ENCODE measurements at regions of chr1 and their contacts with region 1.

Region 1: GRCh38 chr1:151070474-151071276 is at the start of gene GABPB2:
- DNase-seq: peak; percentile 78 to 94 (median 89)
- ATAC-seq: peak; percentile 91
- H3K4me3 ChIP-seq: peak within 1 kb of the TSS; percentile 99
- H3K4me3 Mint-ChIP-seq: peak within 1 kb of the TSS; percentile 94 to 100 (median 99)
- H3K27ac ChIP-seq: peak within 1 kb of the TSS; percentile 94
- H3K27ac Mint-ChIP-seq: peak within 1 kb of the TSS; percentile 97 to 100 (median 100)
- H3K4me1 ChIP-seq: peaks cover 8 to 9% of the 10 kb centered on the region in 2 donors
- H3K4me1 Mint-ChIP-seq: peaks cover 5 to 37% (median 29%) of the 10 kb centered on the region in 7 donors
- H3K27me3 ChIP-seq: no peaks in the 10 kb centered on the region
- H3K27me3 Mint-ChIP-seq: peaks cover 0 to 2% (median 0%) of the 10 kb centered on the region in 5 donors
- total RNA-seq, gene GABPB2: 13.7 to 42.2 (median 32.2) TPM

Region 2: DNA sequence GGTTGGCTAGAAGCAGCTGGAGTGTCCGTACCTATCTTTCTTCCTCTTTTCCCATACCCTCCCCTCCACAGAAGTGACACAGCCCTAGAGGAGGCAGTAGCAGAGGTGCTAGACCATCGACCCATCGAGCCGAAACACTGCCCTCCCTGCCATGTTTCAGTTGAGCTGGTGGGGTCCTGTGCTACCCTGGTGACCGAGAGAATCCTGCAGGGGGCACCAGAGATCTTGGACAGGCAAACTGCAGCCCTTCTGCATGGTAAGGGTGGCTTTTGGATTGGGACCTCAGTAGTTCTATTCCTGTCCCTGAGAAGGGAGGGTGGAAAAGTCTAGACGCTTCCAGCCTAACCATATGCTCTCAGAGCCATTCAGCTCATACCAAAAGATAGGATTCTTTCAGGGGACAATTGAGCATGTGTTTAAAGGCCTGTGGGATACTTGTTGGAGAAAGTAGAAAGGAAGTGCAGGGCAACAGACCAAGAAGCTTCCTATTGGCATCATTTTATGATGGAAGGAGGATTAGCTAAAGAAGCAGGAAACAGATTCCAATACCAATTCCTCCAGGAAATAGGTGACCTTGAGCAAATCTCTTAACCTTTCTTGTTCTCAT is 46.0 kb before region 1 on chr1:
- CTCF ChIA-PET with region 1: interaction called, 6 read pairs
- POLR2A ChIA-PET with region 1: interaction called, 13 read pairs
- intact Hi-C with region 1: loop called (anchors 1 kb)
- DNase-seq: peak; percentile 72 to 91 (median 83)
- ATAC-seq: peak; percentile 100
- H3K4me3 ChIP-seq: no peak overlapping the region
- H3K4me3 Mint-ChIP-seq: peak overlapping the region; percentile 16 to 73 (median 61)
- H3K27ac ChIP-seq: no peak overlapping the region
- H3K27ac Mint-ChIP-seq: peak overlapping the region; percentile 37 to 93 (median 74)
- H3K4me1 ChIP-seq: no peaks in the 10 kb centered on the region
- H3K4me1 Mint-ChIP-seq: peaks cover 4 to 22% (median 6%) of the 10 kb centered on the region in 7 donors
- H3K27me3 ChIP-seq: no peaks in the 10 kb centered on the region
- H3K27me3 Mint-ChIP-seq: no peaks in the 10 kb centered on the region

Region 3: DNA sequence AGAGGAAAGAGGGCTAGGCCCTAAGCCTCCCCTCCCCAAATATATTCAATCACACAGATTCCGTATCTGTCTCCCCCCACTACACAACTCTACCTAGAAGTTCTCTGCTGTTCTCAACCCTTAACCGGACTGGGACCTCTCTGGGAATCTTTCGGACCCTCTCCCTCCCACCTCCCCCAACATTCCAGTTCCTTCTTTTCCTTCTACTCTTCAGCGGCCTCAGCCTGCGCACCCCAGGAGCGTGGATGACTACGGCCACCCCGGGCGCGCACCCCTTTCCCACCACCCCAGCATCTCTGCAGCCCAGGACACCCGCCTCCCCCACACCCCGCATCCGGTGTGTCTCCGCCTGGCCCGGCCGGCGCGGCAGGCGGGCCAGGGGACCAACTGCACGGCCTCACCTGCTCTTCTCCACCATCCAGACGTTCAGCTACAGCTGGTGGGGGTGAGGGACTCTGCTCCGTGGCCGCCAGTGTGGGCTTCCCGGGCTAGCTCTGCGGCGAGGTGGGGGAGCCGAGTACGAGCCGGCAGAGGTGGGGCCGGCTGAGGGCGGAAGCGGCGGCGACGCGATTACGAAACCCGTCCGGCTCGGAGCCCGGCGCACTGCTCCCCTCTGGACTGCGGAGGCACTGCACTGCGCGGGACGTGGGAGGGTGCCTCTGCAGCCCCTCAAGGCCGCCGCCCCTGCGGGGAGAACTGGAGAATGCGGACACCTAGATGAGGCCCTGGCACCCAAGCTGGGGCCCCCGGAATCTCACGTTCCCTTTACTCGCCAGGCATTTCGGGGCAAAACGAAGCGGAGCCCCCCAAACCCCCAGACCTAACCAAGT is 11.4 kb before region 1 on chr1 and contains the start of gene CDC42SE1:
- CTCF ChIA-PET with region 1: interaction called, 14 read pairs
- POLR2A ChIA-PET with region 1: interaction called, 67 read pairs
- intact Hi-C with region 1: loop called (anchors 1 kb)
- DNase-seq: peak; percentile 76 to 85 (median 82)
- ATAC-seq: peak; percentile 84
- H3K4me3 ChIP-seq: peak within 1 kb of the TSS; percentile 82
- H3K4me3 Mint-ChIP-seq: peak within 1 kb of the TSS; percentile 95 to 100 (median 99)
- H3K27ac ChIP-seq: peak within 1 kb of the TSS; percentile 99
- H3K27ac Mint-ChIP-seq: peak within 1 kb of the TSS; percentile 93 to 99 (median 95)
- H3K4me1 ChIP-seq: peaks cover 11 to 26% of the 10 kb centered on the region in 2 donors
- H3K4me1 Mint-ChIP-seq: peaks cover 35 to 55% (median 41%) of the 10 kb centered on the region in 7 donors
- H3K27me3 ChIP-seq: no peaks in the 10 kb centered on the region
- H3K27me3 Mint-ChIP-seq: no peaks in the 10 kb centered on the region
- total RNA-seq, gene CDC42SE1: 362 to 516 (median 425) TPM

Region 4: DNA sequence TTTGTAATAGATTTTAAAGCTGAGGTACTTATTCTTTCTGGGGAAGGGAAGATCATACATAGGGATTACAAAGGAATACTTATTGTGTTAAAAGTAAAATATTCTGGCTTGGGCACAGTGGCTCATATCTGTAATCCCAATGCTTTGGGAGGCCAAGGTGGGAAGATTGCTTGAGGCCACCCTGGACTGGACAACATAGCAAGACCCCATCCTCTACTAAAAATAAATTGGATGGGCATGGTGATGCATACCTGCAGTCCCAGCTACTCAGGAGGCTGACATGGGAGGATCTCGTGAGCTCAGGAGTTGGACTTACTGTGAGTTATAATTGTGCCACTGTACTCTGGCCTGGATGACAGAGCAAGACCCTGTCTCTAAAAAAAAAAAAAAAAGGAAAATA is 27.5 kb after region 1 on chr1:
- CTCF ChIA-PET with region 1: interaction called, 3 read pairs
- POLR2A ChIA-PET with region 1: interaction called, 4 read pairs
- intact Hi-C with region 1: loop called in 1 of 2 experiments (anchors 1 kb)
- DNase-seq: no peak
- ATAC-seq: no peak
- H3K4me3 ChIP-seq: no peak overlapping the region
- H3K4me3 Mint-ChIP-seq: no peak overlapping the region
- H3K27ac ChIP-seq: no peak overlapping the region
- H3K27ac Mint-ChIP-seq: peak overlapping the region in 1 of 9 donors; percentile 25
- H3K4me1 ChIP-seq: no peaks in the 10 kb centered on the region
- H3K4me1 Mint-ChIP-seq: peaks cover 0 to 3% (median 0%) of the 10 kb centered on the region in 7 donors
- H3K27me3 ChIP-seq: no peaks in the 10 kb centered on the region
- H3K27me3 Mint-ChIP-seq: peaks cover 0 to 7% (median 0%) of the 10 kb centered on the region in 5 donors

Region 5: GRCh38 chr1:151146412-151147140 is 75.9 kb after region 1 on chr1 and contains the start of gene SEMA6C:
- CTCF ChIA-PET with region 1: no interaction called
- POLR2A ChIA-PET with region 1: no interaction called
- intact Hi-C with region 1: loop called in 1 of 2 experiments (anchors 2 kb)
- DNase-seq: peak; percentile 70 to 92 (median 78)
- ATAC-seq: peak; percentile 100
- H3K4me3 ChIP-seq: peak within 1 kb of the TSS; percentile 66
- H3K4me3 Mint-ChIP-seq: peak within 1 kb of the TSS; percentile 91 to 99 (median 98)
- H3K27ac ChIP-seq: peak within 1 kb of the TSS; percentile 67
- H3K27ac Mint-ChIP-seq: peak within 1 kb of the TSS; percentile 66 to 94 (median 87)
- H3K4me1 ChIP-seq: no peaks in the 10 kb centered on the region
- H3K4me1 Mint-ChIP-seq: peaks cover 12 to 24% (median 22%) of the 10 kb centered on the region in 7 donors
- H3K27me3 ChIP-seq: no peaks in the 10 kb centered on the region
- H3K27me3 Mint-ChIP-seq: peaks cover 0 to 23% (median 0%) of the 10 kb centered on the region in 5 donors
- total RNA-seq, gene SEMA6C: 2.5 to 12.4 (median 4.7) TPM

Region 6: DNA sequence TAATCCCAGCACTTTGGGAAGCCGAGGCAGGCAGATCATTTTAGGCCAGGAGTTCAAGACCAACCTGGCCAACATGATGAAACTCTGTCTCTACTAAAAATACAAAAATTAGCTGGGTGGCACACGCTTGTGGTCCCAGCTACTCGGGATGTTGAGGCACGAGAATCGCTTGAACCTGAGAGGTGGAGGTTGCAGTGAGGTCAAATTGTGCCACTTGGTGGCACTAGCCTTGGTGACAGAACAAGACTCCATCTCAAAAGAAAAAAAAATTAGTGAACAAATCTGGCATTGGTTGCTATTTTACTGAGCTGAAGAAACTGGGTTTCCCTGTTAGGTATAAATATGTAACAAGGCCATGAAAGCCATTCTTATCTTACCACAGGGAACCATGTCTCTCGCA is 157.0 kb after region 1 on chr1:
- CTCF ChIA-PET with region 1: no interaction called
- POLR2A ChIA-PET with region 1: no interaction called
- intact Hi-C with region 1: no loop called
- DNase-seq: no peak
- ATAC-seq: no peak
- H3K4me3 ChIP-seq: no peak overlapping the region
- H3K4me3 Mint-ChIP-seq: no peak overlapping the region
- H3K27ac ChIP-seq: no peak overlapping the region
- H3K27ac Mint-ChIP-seq: peak overlapping the region in 2 of 9 donors; percentile 43 to 48
- H3K4me1 ChIP-seq: no peaks in the 10 kb centered on the region
- H3K4me1 Mint-ChIP-seq: peaks cover 0 to 8% (median 3%) of the 10 kb centered on the region in 7 donors
- H3K27me3 ChIP-seq: no peaks in the 10 kb centered on the region
- H3K27me3 Mint-ChIP-seq: no peaks in the 10 kb centered on the region